ENCODE measurements at regions of chr5 and their contacts with region 1.

Region 1: DNA sequence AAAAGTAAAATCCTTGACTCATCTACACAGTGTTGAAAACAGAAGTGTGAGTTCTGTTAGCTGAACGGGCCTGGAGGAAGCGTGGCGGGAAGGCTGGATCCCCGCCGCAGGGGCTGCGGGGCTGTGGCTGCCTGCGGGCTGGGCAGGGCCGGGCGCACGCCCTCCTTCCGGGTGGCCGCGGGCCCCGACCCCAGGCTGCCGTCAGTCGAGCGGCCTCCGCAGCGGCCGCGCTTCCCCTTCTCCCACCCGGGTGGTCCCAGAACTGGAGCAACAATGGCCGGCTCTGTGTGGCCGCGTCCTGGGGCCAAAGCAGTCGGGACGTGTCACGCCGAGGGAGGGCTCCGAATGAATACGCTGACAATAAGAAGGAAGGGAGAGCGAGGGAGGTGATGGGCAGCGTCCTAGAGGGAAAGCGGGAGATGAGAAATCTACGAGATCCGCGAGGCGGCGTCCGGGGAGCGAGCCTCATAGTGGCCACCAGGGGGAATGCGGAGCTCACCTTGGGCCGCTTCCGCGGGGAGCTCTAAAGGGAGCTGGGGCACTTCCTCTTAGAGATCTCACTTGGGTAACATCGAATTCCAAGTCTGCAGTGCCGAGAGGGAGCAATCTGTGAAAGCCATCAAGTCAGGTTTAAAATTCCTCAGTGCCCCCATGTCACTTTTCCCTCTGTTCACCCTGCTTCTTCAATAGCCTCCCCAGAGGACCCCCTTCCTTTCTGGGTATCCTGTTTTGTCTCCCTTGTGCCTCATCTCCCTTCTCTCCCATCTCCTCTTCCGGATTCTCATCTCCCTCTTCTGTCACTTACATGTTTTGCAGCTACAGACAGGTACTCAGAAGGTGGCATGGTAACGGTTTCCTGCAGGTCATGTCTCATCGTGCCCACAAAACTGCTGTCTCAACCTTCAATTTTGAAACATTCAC is 83.9 kb downstream of the SLC1A3 start:
- DNase-seq: peak; percentile 48 to 62
- ATAC-seq: peak; percentile 75 to 77
- H3K4me3 ChIP-seq: peak overlapping the region; percentile 52 to 77 (median 63)
- H3K27ac ChIP-seq: peak overlapping the region; percentile 33 to 64 (median 54)
- H3K4me1 ChIP-seq: peaks cover 5 to 24% of the 10 kb centered on the region in 2 donors
- H3K27me3 ChIP-seq: no peaks in the 10 kb centered on the region
- CTCF ChIP-seq: peak; percentile 52 to 87 (median 68)
- POLR2A ChIP-seq: no peak

Region 2: DNA sequence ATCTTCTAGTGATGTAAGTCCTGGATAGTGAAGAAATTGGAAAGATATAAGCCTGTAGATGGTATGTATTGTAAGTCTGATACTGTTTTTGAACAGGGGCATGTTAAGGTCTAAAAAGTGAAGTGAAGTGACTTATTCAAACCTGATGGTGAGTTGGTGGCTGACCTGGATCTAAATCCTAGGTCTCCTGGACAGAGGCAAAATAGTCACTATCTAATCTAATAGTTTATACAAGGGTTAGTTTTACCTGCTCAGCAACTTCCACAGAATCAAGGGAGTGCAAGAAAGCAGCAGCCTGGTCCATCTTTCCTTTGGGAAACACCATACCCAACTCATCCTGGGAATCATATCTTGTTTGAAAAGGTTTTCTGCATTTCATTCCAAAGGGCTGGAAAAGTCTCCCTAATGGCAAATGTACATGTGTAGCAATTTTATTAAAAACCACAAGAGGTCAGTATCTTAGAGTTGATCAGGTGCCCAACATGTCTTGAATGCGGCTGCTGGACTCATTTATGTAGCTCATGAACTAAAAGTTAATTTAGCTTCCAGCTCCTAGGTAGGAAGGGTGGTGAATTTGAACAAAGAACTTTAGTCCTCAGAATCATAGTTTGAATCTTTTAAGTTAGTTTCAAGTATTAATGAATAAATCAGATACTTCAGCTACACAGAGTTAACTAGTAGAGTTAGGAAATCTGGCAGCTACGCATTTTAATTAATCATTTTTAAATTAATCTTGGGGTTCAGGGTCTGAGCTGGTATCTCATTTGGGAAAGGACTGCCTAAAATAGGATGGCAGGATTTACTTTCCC is 512.4 kb before region 1 on chr5:
- in situ Hi-C with region 1: no loop called
- intact Hi-C with region 1: loop called (anchors 5 kb)
- DNase-seq: no peak
- ATAC-seq: peak in 1 of 2 donors; percentile 61
- H3K4me3 ChIP-seq: no peak overlapping the region
- H3K27ac ChIP-seq: no peak overlapping the region
- H3K4me1 ChIP-seq: no peaks in the 10 kb centered on the region
- H3K27me3 ChIP-seq: no peaks in the 10 kb centered on the region
- CTCF ChIP-seq: peak in 3 of 5 experiments; percentile 18 to 53 (median 39)
- POLR2A ChIP-seq: no peak

Region 3: DNA sequence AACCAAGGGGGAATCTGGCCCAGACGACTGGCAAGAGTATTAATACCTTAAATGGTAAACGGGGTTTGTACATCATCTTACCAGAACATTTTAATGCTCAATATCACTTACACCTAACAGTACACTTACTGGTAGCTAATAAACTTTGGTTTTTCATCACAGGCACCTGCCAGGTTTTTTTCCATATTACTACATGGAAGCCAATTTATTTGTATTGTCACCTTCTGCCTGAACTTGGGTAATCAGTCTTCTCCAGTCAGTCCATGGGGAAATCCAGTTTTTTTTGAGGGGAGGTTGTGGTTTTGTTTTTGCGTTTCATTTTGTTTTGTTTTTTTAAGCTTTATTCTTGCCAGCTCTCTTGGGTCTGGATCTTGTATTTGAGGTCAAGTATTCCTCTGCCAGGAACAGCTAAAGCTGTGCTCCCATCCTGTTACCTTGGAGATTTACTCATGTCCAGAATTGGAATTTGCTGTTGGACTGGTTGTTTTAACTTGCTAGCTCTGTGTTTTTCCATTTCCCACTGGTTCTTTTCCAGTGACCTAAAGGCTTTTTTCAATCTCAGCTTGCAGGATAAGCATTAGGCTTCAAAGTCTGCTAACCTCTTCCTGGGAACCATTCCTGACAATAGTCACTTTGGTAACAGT is 437.5 kb before region 1 on chr5:
- in situ Hi-C with region 1: loop called in 2 of 4 experiments (anchors 25 kb)
- intact Hi-C with region 1: no loop called
- DNase-seq: no peak
- ATAC-seq: peak; percentile 56 to 66
- H3K4me3 ChIP-seq: no peak overlapping the region
- H3K27ac ChIP-seq: no peak overlapping the region
- H3K4me1 ChIP-seq: no peaks in the 10 kb centered on the region
- H3K27me3 ChIP-seq: no peaks in the 10 kb centered on the region
- CTCF ChIP-seq: no peak
- POLR2A ChIP-seq: no peak

Region 4: GRCh38 chr5:36507332-36507952 is 182.9 kb before region 1 on chr5:
- in situ Hi-C with region 1: loop called in 2 of 4 experiments (anchors 10 to 25 kb)
- intact Hi-C with region 1: loop called (anchors 1 kb)
- DNase-seq: peak; percentile 30 to 56
- ATAC-seq: peak; percentile 60 to 70
- H3K4me3 ChIP-seq: no peak overlapping the region
- H3K27ac ChIP-seq: no peak overlapping the region
- H3K4me1 ChIP-seq: no peaks in the 10 kb centered on the region
- H3K27me3 ChIP-seq: no peaks in the 10 kb centered on the region
- CTCF ChIP-seq: peak in 4 of 5 experiments; percentile 48 to 80 (median 68)
- POLR2A ChIP-seq: no peak

Region 5: DNA sequence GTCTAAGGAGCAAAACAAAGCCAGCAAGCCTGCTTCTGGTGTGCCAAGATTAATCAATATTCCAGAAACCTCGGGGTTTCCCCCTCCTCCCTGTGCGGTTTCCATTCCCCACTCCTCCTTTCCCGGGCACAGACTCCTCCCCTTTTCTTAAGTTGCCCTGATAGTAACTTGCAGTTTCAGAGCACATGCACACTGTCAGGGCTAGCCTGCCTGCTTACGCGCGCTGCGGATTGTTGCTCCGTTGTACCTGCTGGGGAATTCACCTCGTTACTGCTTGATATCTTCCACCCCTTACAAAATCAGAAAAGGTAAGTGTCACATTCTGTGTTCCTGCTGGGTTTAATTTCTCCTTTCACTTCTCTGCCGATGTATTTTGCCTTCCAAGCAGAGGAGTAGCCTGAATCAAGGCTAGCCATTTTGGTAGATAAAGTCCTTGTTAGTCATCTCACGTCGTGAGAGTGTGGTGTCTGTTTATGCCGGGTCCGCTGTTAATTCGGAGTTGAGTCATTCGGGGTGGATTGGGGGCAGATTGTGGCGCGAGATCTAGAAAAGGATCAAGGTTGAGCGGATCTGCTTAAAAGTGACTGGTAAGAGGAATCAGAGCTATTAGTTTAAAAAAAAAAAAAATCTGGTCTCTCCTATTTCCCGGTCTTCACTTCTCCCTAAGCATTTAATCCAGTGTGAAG is 83.7 kb before region 1 on chr5 and contains the start of gene SLC1A3:
- in situ Hi-C with region 1: loop called in 1 of 4 experiments (anchors 10 kb)
- intact Hi-C with region 1: loop called (anchors 2 kb)
- DNase-seq: peak; percentile 64 to 72
- ATAC-seq: peak; percentile 94 to 95
- H3K4me3 ChIP-seq: peak within 1 kb of the TSS; percentile 59 to 83 (median 76)
- H3K27ac ChIP-seq: peak within 1 kb of the TSS; percentile 75 to 94 (median 91)
- H3K4me1 ChIP-seq: peaks cover 21 to 34% of the 10 kb centered on the region in 2 donors
- H3K27me3 ChIP-seq: no peaks in the 10 kb centered on the region
- CTCF ChIP-seq: no peak
- POLR2A ChIP-seq: peak; percentile 77 to 92
- total RNA-seq, gene SLC1A3: 5.3 to 69.4 (median 17.4) TPM